ENCODE measurements at regions of chr17 and their contacts with region 1.

Region 1: DNA sequence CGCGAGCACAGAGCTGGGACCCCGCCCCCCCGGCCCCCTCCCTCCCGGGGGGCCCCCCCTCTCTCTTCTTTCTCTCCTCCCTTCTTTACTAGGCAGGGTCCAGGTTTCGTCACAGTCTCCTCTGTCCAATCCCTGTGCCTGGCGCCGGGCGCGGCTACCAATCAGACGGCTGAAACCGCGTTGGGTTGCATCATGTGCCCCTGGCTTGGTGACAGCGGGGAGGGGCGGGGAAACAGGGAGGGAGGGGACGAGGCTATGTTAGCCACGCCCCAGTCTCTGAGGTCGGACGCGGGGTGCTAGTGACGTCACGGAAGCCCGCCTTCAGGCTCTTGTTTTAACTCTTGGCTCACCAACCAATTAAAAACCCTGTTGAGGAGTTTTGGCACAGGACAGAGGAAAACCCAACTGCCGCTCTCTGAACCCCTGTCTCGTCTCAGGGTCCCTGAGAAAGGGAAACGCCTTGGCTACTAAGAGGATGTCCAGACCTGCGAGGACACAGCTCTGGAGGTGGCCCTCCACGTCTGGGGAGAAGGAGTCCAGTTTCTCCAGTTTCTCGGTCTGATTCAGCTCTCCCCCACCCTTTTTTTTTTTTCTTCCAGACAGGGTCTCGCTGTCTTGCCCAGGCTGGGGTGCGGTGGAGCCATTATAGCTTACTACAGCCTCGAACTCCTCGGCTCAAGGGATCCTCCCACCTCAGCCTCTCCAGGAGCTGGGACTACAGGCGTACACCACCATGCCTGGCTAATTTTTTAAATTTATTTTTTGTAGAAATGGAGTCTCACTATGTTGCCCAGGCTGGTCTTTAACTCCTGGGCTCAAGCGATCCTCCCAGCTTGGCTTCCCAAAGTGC is 439 bp upstream of the PLEKHH3 start:
- DNase-seq: peak; percentile 99
- ATAC-seq: peak; percentile 64
- H3K4me3 ChIP-seq: peak overlapping the region; percentile 76 to 99 (median 83)
- H3K27ac ChIP-seq: peak overlapping the region; percentile 92
- H3K4me1 ChIP-seq: peaks cover 51% of the 10 kb centered on the region
- H3K27me3 ChIP-seq: no peaks in the 10 kb centered on the region
- CTCF ChIP-seq: no peak
- EP300 ChIP-seq: peak in 1 of 2 experiments; percentile 54; a peak in 1 of 4 replicates
- POLR2A ChIP-seq: no peak; a peak in 1 of 4 replicates
- RAD21 ChIP-seq: no peak

Region 2: DNA sequence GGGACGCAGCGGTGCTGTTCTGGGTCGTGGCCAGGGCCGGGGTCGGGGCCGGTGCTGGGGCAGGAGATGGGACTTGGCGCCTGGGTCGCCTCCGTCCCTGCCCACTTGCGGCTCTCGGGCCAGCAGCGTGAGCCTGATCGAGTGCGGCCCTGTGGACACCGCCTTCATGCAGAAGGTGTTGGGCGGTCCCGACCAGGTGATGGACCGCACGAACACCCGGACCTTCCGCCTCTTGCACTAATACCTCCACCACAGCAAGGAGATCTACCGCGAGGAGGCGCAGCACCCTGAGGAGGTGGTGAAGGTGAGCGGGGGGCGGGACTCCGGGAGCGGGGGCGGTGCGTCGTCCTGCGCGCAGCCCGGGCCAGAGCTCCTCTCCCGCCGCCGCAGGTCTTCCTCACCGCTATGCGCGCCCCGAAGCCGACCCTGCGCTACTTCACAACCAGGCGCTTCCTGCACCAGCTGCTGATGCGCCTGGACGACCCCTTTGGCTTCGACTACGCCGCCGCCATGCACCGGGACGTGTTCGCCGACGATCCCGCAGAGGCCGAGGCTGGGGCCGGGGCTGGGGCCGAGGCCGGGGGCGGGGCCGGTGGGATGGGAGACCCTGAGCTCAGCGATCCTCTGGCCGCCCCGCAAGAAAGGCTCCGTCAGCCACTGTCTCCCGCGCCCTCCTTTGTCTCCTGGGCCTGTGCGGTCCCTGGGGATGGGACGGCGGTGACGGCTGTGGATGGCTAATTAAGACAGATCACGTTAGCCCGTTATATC is 129.0 kb before region 1 on chr17:
- CTCF ChIA-PET with region 1: no interaction called
- POLR2A ChIA-PET with region 1: no interaction called
- in situ Hi-C with region 1: no loop called
- intact Hi-C with region 1: no loop called
- DNase-seq: no peak
- ATAC-seq: no peak
- H3K4me3 ChIP-seq: no peak overlapping the region
- H3K27ac ChIP-seq: no peak overlapping the region
- H3K4me1 ChIP-seq: peaks cover 65% of the 10 kb centered on the region
- H3K27me3 ChIP-seq: no peaks in the 10 kb centered on the region
- CTCF ChIP-seq: peak; percentile 33
- EP300 ChIP-seq: no peak
- POLR2A ChIP-seq: no peak; a peak in 1 of 4 replicates
- RAD21 ChIP-seq: no peak

Region 3: GRCh38 chr17:42609182-42609813 is 67.9 kb before region 1 on chr17 and contains the starts of genes RETREG3 and TUBG1:
- CTCF ChIA-PET with region 1: no interaction called
- POLR2A ChIA-PET with region 1: interaction called, 60 read pairs
- in situ Hi-C with region 1: no loop called
- intact Hi-C with region 1: loop called (anchors 2 kb)
- DNase-seq: peak; percentile 99
- ATAC-seq: peak; percentile 89
- H3K4me3 ChIP-seq: peak within 1 kb of the TSS; percentile 75 to 94 (median 91)
- H3K27ac ChIP-seq: peak within 1 kb of the TSS; percentile 89
- H3K4me1 ChIP-seq: peaks cover 59% of the 10 kb centered on the region
- H3K27me3 ChIP-seq: no peaks in the 10 kb centered on the region; a peak in 1 of 5 replicates
- CTCF ChIP-seq: peak; percentile 45
- EP300 ChIP-seq: no peak
- POLR2A ChIP-seq: peak; percentile 93 to 95
- RAD21 ChIP-seq: peak; percentile 81
- total RNA-seq, gene RETREG3: 38.2 and 55.8 TPM in 2 replicates
- total RNA-seq, gene TUBG1: 137 TPM in 2 replicates

Region 4: DNA sequence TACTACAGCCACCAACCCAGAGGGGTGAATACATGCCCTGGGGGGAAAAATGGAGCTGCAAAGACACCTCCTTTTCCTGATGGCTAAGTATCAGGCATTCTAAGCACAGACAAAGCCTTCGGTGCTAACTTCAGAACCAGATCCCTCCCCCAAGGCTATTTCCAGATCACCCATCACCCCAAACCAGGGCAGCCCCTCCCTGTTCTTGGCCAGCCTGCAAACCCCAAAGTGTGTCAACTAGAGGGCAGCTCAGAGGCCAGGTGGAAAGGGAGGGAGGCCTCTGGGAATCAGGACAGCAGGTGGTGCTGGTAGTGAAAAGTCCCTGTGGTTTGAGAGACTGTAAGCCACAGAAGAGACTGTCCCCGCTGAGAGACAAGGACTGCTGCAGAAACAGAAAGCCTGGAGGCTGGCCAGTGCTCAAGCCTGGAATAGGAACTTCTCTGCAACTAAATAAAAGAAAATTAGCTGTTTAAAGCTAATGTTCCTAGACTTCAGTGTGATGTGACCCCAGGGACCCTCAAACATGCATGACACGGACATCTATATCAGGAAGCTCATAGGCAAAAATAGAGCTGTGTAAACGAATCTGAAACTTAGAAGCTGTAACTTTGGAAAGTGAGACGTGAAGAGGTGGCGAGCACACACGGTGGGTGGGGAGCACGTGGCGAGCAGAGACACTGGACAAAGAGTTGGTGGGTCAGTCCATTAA is 58.6 kb before region 1 on chr17:
- CTCF ChIA-PET with region 1: interaction called, 6 read pairs
- POLR2A ChIA-PET with region 1: interaction called, 12 read pairs
- in situ Hi-C with region 1: no loop called
- intact Hi-C with region 1: loop called (anchors 1 kb)
- DNase-seq: peak; percentile 82
- ATAC-seq: peak; percentile 94
- H3K4me3 ChIP-seq: peak overlapping the region in 2 of 3 experiments; percentile 23 to 37; a peak in 3 of 6 replicates
- H3K27ac ChIP-seq: peak overlapping the region; percentile 24
- H3K4me1 ChIP-seq: peaks cover 35% of the 10 kb centered on the region
- H3K27me3 ChIP-seq: no peaks in the 10 kb centered on the region
- CTCF ChIP-seq: peak; percentile 90
- EP300 ChIP-seq: no peak
- POLR2A ChIP-seq: no peak; a peak in 2 of 4 replicates
- RAD21 ChIP-seq: peak; percentile 81

Region 5: GRCh38 chr17:42651378-42651777 is 25.9 kb before region 1 on chr17:
- CTCF ChIA-PET with region 1: no interaction called
- POLR2A ChIA-PET with region 1: no interaction called
- in situ Hi-C with region 1: no loop called
- intact Hi-C with region 1: no loop called
- DNase-seq: no peak
- ATAC-seq: no peak; the same call in 2 of the 3 replicates
- H3K4me3 ChIP-seq: no peak overlapping the region
- H3K27ac ChIP-seq: no peak overlapping the region
- H3K4me1 ChIP-seq: peaks cover 33% of the 10 kb centered on the region
- H3K27me3 ChIP-seq: peaks cover 0 to 9% of the 10 kb centered on the region in 2 experiments; a peak in 3 of 5 replicates
- CTCF ChIP-seq: no peak
- EP300 ChIP-seq: no peak
- POLR2A ChIP-seq: no peak
- RAD21 ChIP-seq: no peak

Measured in HepG2 (cell line).